ENCODE measurements at regions of chr12 and their contacts with region 1.

Region 1: DNA sequence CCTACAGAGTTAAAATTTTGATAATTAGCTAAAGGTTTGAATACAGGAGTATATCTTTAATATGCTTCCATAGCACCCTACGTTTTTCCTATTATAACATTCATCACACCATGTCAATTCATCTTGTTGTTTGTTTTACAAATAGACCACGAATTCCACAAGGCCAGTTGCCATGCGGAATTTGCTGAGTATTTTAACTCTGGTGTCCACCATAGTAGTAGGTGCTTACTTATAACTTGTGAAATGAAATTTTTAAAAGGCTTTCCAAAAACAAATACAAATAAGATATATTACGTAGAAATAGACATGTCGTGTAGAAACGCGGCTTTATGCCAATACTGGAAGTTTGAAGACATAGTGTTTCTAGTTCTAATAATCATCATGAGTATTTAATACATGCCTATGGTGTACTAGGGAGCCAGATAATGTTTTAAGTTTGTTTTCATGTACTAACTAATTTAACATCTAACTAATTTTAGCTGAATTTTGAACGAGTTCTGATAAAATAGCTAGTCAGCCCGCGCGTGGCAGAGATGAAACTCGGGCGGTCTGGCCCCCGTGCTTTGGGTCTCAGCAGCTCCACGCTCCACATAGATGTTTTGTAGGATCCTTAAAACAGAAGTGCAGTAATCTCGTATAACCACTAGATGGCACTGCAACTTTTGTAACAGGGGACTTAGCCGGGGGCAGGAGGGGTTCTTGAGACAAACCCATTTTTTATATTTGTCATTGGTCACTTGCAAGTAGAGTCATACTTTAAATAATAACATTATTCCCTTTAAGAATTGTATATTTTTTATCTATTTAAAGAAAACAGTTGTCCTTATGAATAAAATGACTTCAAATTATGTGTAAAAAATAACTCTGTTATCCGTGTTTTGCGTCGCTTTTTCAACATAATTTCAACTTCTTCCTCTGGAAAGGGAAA is 10.2 kb downstream of the CD69 start:
- DNase-seq: peak in 7 of 9 experiments; percentile 43 to 88 (median 58)
- ATAC-seq: peak; percentile 60
- H3K4me3 ChIP-seq: no peak overlapping the region
- H3K4me3 Mint-ChIP-seq: peak overlapping the region; percentile 59
- H3K27ac ChIP-seq: no peak overlapping the region
- H3K27ac Mint-ChIP-seq: peak overlapping the region; percentile 69
- H3K4me1 ChIP-seq: peaks cover 27% of the 10 kb centered on the region
- H3K4me1 Mint-ChIP-seq: peaks cover 48% of the 10 kb centered on the region
- H3K27me3 ChIP-seq: no peaks in the 10 kb centered on the region
- H3K27me3 Mint-ChIP-seq: no peaks in the 10 kb centered on the region
- CTCF ChIP-seq: peak; percentile 80

Region 2: GRCh38 chr12:9647825-9648700 is 102.5 kb before region 1 on chr12:
- CTCF ChIA-PET with region 1: interaction called, 10 read pairs
- POLR2A ChIA-PET with region 1: interaction called, 5 read pairs
- intact Hi-C with region 1: no loop called
- DNase-seq: peak; percentile 79 to 98 (median 90)
- ATAC-seq: peak; percentile 76
- H3K4me3 ChIP-seq: peak overlapping the region; percentile 81 to 85
- H3K4me3 Mint-ChIP-seq: peak overlapping the region; percentile 98
- H3K27ac ChIP-seq: peak overlapping the region; percentile 83 to 93
- H3K27ac Mint-ChIP-seq: peak overlapping the region; percentile 96
- H3K4me1 ChIP-seq: peaks cover 55% of the 10 kb centered on the region
- H3K4me1 Mint-ChIP-seq: peaks cover 61% of the 10 kb centered on the region
- H3K27me3 ChIP-seq: no peaks in the 10 kb centered on the region
- H3K27me3 Mint-ChIP-seq: no peaks in the 10 kb centered on the region
- CTCF ChIP-seq: no peak

Region 3: DNA sequence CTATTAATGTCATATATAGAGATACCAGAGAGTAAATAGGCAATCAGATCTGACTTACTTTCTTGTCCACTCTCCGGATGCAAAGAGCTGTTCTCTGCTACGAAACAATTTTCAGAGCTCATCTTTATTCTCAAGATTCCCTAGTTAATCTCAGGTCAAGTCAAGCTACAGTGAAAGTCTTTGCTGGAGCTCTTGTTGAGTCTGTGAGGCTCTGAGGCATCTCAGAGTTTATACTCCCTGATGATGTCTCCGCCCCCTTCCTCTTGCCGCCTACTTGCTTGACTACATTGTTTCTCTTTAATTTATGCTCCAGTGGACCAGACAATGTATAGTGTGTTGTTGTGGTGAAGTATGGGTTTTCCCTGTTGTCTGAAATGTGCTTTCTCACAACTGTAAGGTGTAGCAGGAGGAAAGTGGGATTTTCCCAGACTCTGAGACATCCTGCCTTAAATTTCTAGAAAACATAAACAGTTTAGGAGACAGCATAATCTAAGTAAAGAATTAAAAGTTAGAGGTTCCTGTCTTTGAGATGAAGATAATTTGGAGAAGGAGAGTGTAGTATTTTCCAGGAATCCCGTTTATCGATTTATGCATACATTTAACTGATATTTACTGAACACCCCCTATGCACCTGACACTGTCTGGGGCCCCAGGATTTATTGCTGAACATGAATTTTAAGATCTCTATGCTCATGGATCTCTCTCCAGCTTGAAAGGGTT is 10.3 kb after region 1 on chr12 and contains the start of gene CD69:
- CTCF ChIA-PET with region 1: interaction called, 74 read pairs
- POLR2A ChIA-PET with region 1: interaction called, 27 read pairs
- intact Hi-C with region 1: loop called in 1 of 2 experiments (anchors 1 kb)
- DNase-seq: peak; percentile 60 to 96 (median 77)
- ATAC-seq: peak; percentile 53
- H3K4me3 ChIP-seq: peak within 1 kb of the TSS; percentile 79
- H3K4me3 Mint-ChIP-seq: peak within 1 kb of the TSS; percentile 100
- H3K27ac ChIP-seq: peak within 1 kb of the TSS; percentile 97 to 98
- H3K27ac Mint-ChIP-seq: peak within 1 kb of the TSS; percentile 96
- H3K4me1 ChIP-seq: peaks cover 51% of the 10 kb centered on the region
- H3K4me1 Mint-ChIP-seq: peaks cover 64% of the 10 kb centered on the region
- H3K27me3 ChIP-seq: no peaks in the 10 kb centered on the region
- H3K27me3 Mint-ChIP-seq: no peaks in the 10 kb centered on the region
- CTCF ChIP-seq: no peak
- total RNA-seq, gene CD69: 502 to 504 TPM

Region 4: DNA sequence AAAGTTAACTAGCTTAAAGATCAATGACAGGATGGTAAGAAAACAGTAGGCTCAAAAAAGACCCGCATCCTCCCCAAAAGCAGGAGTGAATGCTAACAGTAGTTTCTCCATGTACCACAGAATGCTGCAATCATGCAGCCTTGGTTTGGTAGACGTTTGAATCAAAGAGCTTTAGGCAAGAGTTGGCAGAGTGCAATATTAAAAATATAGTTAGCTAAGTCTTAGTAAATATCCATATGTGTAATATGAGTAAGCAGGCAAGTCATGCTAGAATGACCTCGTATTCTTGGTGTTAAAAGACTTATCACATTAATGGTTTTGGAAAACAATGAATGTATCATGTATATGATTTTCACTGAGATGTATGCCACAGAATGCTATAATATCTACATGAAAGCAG is 58.0 kb after region 1 on chr12:
- CTCF ChIA-PET with region 1: interaction called, 483 read pairs
- POLR2A ChIA-PET with region 1: interaction called, 3 read pairs
- intact Hi-C with region 1: no loop called
- DNase-seq: no peak
- ATAC-seq: no peak
- H3K4me3 ChIP-seq: no peak overlapping the region
- H3K4me3 Mint-ChIP-seq: no peak overlapping the region
- H3K27ac ChIP-seq: no peak overlapping the region
- H3K27ac Mint-ChIP-seq: no peak overlapping the region
- H3K4me1 ChIP-seq: peaks cover 1% of the 10 kb centered on the region
- H3K4me1 Mint-ChIP-seq: peaks cover 4% of the 10 kb centered on the region
- H3K27me3 ChIP-seq: no peaks in the 10 kb centered on the region
- H3K27me3 Mint-ChIP-seq: peaks cover 4% of the 10 kb centered on the region
- CTCF ChIP-seq: no peak

Region 5: DNA sequence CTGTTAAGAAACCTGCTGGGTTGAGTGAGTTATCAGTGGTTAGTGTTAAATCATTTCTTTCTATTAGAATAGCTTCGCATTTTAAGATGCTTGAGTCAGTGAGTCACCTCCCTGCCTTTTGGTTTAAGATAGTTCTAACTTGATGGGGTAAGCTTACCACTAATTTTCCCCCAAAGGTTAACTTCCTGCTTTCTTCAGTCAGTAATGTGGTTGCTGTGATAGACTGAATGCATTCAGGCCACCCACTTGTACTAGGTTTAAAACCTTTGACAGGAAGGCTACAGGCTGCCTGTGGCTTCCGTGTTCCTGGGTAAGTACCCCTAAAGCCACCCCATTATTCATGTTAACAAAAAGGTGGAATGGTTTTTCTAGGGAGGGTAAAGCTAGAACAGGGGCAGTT is 156.3 kb after region 1 on chr12:
- CTCF ChIA-PET with region 1: interaction called, 19 read pairs
- POLR2A ChIA-PET with region 1: no interaction called
- intact Hi-C with region 1: no loop called
- DNase-seq: peak in 8 of 9 experiments; percentile 15 to 86 (median 59)
- ATAC-seq: peak; percentile 96
- H3K4me3 ChIP-seq: peak overlapping the region in 1 of 2 experiments; percentile 8
- H3K4me3 Mint-ChIP-seq: peak overlapping the region; percentile 49
- H3K27ac ChIP-seq: peak overlapping the region in 1 of 2 experiments; percentile 3
- H3K27ac Mint-ChIP-seq: peak overlapping the region; percentile 82
- H3K4me1 ChIP-seq: peaks cover 28% of the 10 kb centered on the region
- H3K4me1 Mint-ChIP-seq: peaks cover 36% of the 10 kb centered on the region
- H3K27me3 ChIP-seq: no peaks in the 10 kb centered on the region
- H3K27me3 Mint-ChIP-seq: no peaks in the 10 kb centered on the region
- CTCF ChIP-seq: no peak

Region 6: DNA sequence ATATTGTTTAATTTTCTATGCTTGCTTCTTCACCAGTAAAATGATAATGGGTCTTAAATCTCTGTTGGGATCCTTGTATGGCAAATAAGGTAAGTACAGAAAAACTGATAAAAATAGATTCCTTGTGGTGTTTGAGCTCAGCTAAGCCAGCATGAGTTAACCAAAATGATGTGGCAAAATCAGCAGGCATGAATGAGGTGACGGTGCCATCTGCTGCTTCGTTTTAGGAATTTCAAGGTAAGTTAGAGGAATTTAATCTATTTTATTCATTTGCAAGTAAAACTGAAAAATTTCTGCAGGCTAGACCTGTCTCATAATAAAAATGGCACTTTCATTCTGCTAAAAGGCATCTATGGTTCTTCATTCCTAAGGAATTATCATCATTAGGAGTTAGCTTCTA is 389.5 kb after region 1 on chr12:
- CTCF ChIA-PET with region 1: interaction called, 17 read pairs
- POLR2A ChIA-PET with region 1: no interaction called
- intact Hi-C with region 1: loop called in 1 of 2 experiments (anchors 1 kb)
- DNase-seq: peak in 6 of 9 experiments; percentile 9 to 69 (median 46)
- ATAC-seq: peak; percentile 51
- H3K4me3 ChIP-seq: no peak overlapping the region
- H3K4me3 Mint-ChIP-seq: no peak overlapping the region
- H3K27ac ChIP-seq: no peak overlapping the region
- H3K27ac Mint-ChIP-seq: no peak overlapping the region
- H3K4me1 ChIP-seq: no peaks in the 10 kb centered on the region
- H3K4me1 Mint-ChIP-seq: peaks cover 2% of the 10 kb centered on the region
- H3K27me3 ChIP-seq: peaks cover 0 to 4% of the 10 kb centered on the region in 2 experiments
- H3K27me3 Mint-ChIP-seq: peaks cover 6% of the 10 kb centered on the region
- CTCF ChIP-seq: peak; percentile 68

Measured in CD8-positive, alpha-beta T cell (primary cell).